ENCODE measurements at regions of chr2 and their contacts with region 1.

Region 1: DNA sequence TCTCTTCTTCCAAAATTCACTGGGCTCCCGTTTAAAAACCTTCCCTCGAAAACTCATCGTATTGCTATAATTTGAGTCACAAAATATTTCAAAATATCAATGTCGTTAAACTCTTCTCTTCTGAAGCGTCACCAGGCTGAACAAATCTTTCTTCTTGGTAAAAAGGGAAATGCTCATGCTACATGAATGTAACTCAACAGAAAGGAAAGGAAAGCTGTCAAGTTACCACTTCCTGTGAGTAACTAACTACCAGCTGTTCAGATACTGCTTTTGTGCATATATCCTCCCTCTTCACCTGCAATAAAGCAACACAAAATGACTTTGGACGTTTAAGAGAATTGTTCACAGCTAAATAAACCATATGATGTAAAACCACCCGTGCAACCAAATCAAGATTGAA is 95.4 kb downstream of the DOCK10 start:
- DNase-seq: no peak
- H3K4me3 Mint-ChIP-seq: peak overlapping the region; percentile 90
- H3K27ac Mint-ChIP-seq: peak overlapping the region; percentile 96
- H3K4me1 Mint-ChIP-seq: peaks cover 91% of the 10 kb centered on the region
- H3K27me3 Mint-ChIP-seq: no peaks in the 10 kb centered on the region

Region 2: GRCh38 chr2:224025874-224026273 is 921.0 kb before region 1 on chr2:
- intact Hi-C with region 1: loop called (anchors 5 kb)
- DNase-seq: peak; percentile 65
- H3K4me3 Mint-ChIP-seq: peak overlapping the region; percentile 51
- H3K27ac Mint-ChIP-seq: peak overlapping the region; percentile 87
- H3K4me1 Mint-ChIP-seq: peaks cover 77% of the 10 kb centered on the region
- H3K27me3 Mint-ChIP-seq: no peaks in the 10 kb centered on the region

Region 3: DNA sequence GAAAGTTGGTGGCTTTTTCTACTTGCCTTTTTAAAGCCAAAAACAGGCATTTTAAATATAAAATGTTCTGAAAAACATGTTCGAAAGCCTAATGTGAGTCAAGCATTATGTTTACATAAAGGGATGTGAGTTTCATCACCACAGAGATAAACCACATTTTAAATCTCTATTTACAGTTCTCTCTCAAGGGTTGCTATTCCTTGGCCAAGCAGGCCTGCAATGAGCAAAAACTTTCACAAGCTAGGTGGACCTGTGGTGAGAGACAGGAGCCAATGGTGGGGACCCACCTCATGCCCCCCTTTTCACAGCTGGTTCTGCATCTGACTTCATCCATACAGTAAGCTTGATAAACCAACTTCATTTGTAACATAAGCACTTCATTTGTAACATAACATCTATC is 426.8 kb before region 1 on chr2:
- intact Hi-C with region 1: loop called (anchors 5 kb)
- DNase-seq: peak; percentile 16
- H3K4me3 Mint-ChIP-seq: no peak overlapping the region
- H3K27ac Mint-ChIP-seq: peak overlapping the region; percentile 68
- H3K4me1 Mint-ChIP-seq: peaks cover 48% of the 10 kb centered on the region
- H3K27me3 Mint-ChIP-seq: no peaks in the 10 kb centered on the region

Region 4: DNA sequence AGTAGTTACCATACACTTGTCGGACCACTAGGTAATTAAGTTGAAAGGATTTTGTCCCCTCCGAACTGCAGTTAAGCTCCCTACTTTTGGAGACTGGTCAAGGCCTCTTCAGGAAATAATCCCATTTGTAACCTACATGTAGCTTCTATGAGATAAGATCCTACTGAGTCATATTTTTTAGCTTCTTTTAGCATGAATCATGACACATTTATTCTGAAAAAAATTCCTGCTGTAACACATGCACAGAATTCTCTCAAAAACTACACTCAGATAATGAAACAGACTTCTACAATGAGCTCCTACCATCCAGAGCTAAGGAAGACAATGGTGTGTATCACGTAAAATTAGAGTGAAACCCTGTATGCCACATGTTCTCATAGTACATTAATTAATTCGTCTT is 130.1 kb before region 1 on chr2:
- intact Hi-C with region 1: no loop called
- DNase-seq: no peak
- H3K4me3 Mint-ChIP-seq: no peak overlapping the region
- H3K27ac Mint-ChIP-seq: no peak overlapping the region
- H3K4me1 Mint-ChIP-seq: no peaks in the 10 kb centered on the region
- H3K27me3 Mint-ChIP-seq: no peaks in the 10 kb centered on the region

Region 5: GRCh38 chr2:224885836-224886547 is 60.9 kb before region 1 on chr2:
- intact Hi-C with region 1: loop called (anchors 2 kb)
- DNase-seq: no peak
- H3K4me3 Mint-ChIP-seq: no peak overlapping the region
- H3K27ac Mint-ChIP-seq: peak overlapping the region; percentile 67
- H3K4me1 Mint-ChIP-seq: peaks cover 77% of the 10 kb centered on the region
- H3K27me3 Mint-ChIP-seq: no peaks in the 10 kb centered on the region

Region 6: GRCh38 chr2:224982910-224983711 is 36.2 kb after region 1 on chr2:
- intact Hi-C with region 1: loop called (anchors 1 kb)
- DNase-seq: peak; percentile 45
- H3K4me3 Mint-ChIP-seq: peak overlapping the region; percentile 80
- H3K27ac Mint-ChIP-seq: peak overlapping the region; percentile 96
- H3K4me1 Mint-ChIP-seq: peaks cover 86% of the 10 kb centered on the region
- H3K27me3 Mint-ChIP-seq: no peaks in the 10 kb centered on the region

Region 7: DNA sequence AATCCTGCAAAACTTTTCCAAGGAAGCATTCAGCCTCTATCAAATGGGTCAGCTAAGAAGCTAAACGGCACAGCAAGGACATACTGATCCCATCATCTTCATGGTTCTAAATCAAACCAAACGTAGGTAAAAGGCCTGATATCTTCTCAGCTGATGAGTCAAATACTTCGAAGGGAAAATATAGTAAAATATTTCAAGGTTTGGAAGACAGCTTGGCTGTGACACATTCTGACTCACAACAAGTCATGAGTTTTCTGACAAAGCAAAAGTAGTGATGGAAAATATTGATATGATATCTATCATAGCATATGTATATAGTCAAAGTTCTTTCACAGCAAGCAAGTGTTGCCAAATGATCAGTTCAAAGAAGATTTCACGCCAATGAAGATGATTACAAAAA is 63.9 kb after region 1 on chr2:
- intact Hi-C with region 1: loop called (anchors 1 kb)
- DNase-seq: no peak
- H3K4me3 Mint-ChIP-seq: peak overlapping the region; percentile 57
- H3K27ac Mint-ChIP-seq: peak overlapping the region; percentile 90
- H3K4me1 Mint-ChIP-seq: peaks cover 75% of the 10 kb centered on the region
- H3K27me3 Mint-ChIP-seq: no peaks in the 10 kb centered on the region